Calu3 (cell line): ENCODE measurements at regions of chr14 and their contacts with region 1.

Region 1: GRCh38 chr14:34971381-34971780 is 11.4 kb upstream of the SRP54 start:
- DNase-seq: no peak
- H3K4me3 Mint-ChIP-seq: no peak overlapping the region
- H3K27ac Mint-ChIP-seq: no peak overlapping the region
- H3K4me1 Mint-ChIP-seq: no peaks in the 10 kb centered on the region
- H3K27me3 Mint-ChIP-seq: no peaks in the 10 kb centered on the region
- CTCF ChIP-seq: no peak

Region 2: DNA sequence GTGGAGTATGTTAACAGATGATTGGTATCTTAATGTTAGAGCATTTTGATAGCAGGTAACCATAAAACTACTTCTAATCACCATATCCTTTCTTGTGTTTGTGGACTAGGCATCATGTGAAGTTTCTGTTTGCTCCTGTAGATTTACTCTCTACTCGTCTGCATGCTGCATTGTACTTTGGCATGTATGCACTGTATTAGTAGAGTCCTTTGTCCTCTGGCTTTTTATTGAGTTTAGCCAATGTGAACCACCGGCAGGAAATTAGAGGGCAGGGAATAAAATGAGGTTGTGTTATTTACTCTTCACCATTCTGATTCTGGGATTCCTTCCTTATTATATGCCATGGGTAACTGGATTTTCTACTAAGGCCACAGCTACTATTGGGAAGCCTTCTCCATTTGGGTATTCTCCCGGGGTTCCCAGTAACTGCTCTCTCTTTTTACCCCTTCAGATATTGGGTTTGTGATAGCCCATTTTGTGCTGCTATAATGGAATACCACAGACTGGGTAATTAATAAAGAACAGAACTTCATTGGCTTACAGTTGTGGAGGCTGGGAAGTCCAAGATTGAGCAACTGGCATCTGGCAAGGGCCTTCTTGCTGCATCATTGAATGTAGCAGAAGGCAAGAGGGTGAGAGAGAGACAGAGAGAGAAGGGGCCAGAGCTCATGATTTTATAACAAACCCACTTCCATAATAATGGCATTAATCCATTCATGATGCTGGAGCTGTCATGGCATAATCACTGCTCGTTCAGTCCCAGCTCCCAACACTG is 97.0 kb after region 1 on chr14:
- CTCF ChIA-PET with region 1: interaction called, 11 read pairs
- intact Hi-C with region 1: no loop called
- DNase-seq: no peak
- H3K4me3 Mint-ChIP-seq: no peak overlapping the region
- H3K27ac Mint-ChIP-seq: no peak overlapping the region
- H3K4me1 Mint-ChIP-seq: no peaks in the 10 kb centered on the region
- H3K27me3 Mint-ChIP-seq: no peaks in the 10 kb centered on the region
- CTCF ChIP-seq: no peak